ENCODE measurements at regions of chr22 and their contacts with region 1.

Region 1: GRCh38 chr22:37538590-37539357 is 19.6 kb upstream of the CARD10 start:
- DNase-seq: peak; percentile 45
- H3K4me3 ChIP-seq: no peak overlapping the region
- H3K27me3 ChIP-seq: no peaks in the 10 kb centered on the region
- CTCF ChIP-seq: peak; percentile 93

Region 2: DNA sequence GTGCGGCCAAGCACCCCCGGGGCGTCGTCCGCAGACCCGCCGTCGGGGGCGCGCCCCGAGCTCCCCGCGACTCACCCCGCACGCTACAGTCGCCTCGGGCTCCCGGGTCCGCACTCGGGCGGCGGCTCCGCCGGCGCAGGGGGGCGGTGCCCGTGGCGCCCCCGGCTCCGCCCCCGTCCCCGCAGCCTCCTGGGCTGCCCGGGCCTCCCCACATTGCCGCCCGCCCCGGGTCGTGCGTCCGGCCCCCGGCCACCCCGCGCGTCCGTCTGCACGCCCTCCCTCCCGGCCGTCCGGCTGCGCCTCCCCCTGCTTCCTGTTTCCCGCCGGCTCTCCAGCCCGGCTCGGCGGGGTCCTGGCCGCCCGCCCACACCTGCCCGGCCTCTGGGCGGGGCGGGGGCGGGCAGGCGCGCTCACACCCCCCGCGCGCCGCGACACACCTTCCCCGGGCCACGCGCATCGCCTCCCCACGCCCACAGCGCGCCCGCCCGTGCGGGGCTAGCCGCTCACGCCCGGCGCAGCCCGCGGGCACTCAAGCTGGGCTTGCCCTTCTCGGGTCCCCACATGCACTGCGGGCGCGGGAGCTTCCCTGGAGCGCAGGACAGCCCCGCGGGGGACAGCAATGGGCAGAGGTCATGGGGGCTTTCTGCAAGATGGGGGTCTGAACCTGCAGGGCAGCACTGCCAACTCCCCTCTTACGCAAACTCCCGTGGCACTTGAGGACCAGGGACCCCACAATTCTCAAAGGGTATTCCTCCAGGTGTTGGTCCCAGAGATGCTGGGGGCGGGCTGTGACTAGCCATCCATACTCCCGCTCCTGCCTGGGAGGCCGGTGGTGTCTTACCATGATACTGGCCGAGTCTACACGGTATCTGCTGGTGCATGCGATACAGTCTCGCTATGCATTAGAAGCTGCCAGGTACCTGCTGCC is 19.2 kb before region 1 on chr22 and contains the start of gene CARD10:
- CTCF ChIA-PET with region 1: interaction called, 12 read pairs
- POLR2A ChIA-PET with region 1: no interaction called
- DNase-seq: no peak
- H3K4me3 ChIP-seq: peak within 1 kb of the TSS; percentile 54
- H3K27me3 ChIP-seq: no peaks in the 10 kb centered on the region
- CTCF ChIP-seq: no peak
- polyA plus RNA-seq, gene CARD10: 2.3 and 4.5 TPM in 2 replicates

Region 3: GRCh38 chr22:37525073-37525748 is 13.6 kb before region 1 on chr22:
- CTCF ChIA-PET with region 1: interaction called, 19 read pairs
- POLR2A ChIA-PET with region 1: no interaction called
- DNase-seq: peak; percentile 50
- H3K4me3 ChIP-seq: no peak overlapping the region
- H3K27me3 ChIP-seq: no peaks in the 10 kb centered on the region
- CTCF ChIP-seq: no peak

Region 4: GRCh38 chr22:37566903-37567820 is 28.4 kb after region 1 on chr22:
- CTCF ChIA-PET with region 1: interaction called, 551 read pairs
- POLR2A ChIA-PET with region 1: no interaction called
- DNase-seq: no peak
- H3K4me3 ChIP-seq: no peak overlapping the region
- H3K27me3 ChIP-seq: no peaks in the 10 kb centered on the region
- CTCF ChIP-seq: peak; percentile 91

Region 5: GRCh38 chr22:37726241-37726887 is 187.6 kb after region 1 on chr22:
- CTCF ChIA-PET with region 1: no interaction called
- POLR2A ChIA-PET with region 1: no interaction called
- DNase-seq: no peak
- H3K4me3 ChIP-seq: no peak overlapping the region
- H3K27me3 ChIP-seq: no peaks in the 10 kb centered on the region
- CTCF ChIP-seq: 0 out of 2 replicates have a peak, but pooled peaks have one; percentile 21

Measured in BJ (cell line).